ENCODE measurements at regions of chr3 and their contacts with region 1.

Region 1: DNA sequence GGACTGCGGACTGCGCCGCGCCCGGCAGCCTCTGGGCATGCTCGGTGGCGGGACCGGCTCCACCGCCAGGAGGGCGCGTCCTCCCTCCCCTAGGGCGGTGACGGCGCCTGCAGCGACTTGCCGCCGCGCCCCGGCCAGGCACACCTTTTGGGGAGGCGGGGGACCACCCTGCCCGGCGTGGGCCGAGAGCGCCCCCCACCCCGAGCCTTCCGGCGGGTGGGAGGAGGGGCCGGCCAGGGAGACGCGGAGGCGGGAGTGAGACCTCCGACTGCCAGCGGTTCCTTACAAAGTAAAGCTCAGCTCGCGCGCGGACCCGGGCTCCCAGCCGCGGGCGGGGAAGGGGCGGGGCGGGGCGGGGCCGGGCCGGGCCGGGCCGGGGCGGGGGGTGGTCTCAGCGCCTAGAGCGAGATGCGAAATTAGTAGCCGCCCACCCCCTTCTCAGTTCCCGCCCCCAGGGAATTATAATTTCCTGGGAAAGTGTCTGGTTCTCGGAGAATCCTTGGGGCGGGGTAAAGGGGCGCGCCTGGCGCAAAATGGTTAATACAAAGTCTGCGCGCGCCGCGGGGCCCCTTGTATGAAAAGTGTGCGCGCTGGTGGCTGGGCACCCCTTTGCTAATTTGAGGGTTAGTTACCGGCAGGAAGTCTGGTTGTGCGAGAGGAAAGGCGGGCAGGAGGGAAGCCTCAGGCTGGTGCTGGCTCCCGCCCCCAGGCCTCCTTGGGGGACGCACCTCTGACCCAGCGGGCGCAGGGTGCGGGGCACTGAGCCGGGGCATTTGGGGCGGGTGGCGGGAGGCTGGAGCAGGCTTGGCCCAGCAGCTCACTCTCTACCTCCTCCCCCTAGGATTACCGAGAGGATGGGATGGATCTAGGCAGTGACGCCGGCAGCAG is 224.8 kb upstream of the IL12A start:
- DNase-seq: peak; percentile 91
- ATAC-seq: peak; percentile 43
- H3K4me3 ChIP-seq: peak overlapping the region; percentile 76
- H3K27ac ChIP-seq: peak overlapping the region; percentile 90
- H3K4me1 ChIP-seq: peaks cover 43% of the 10 kb centered on the region
- H3K27me3 ChIP-seq: no peaks in the 10 kb centered on the region
- CTCF ChIP-seq: no peak

Region 2: GRCh38 chr3:159458010-159458409 is 305.8 kb before region 1 on chr3:
- CTCF ChIA-PET with region 1: no interaction called
- POLR2A ChIA-PET with region 1: no interaction called
- intact Hi-C with region 1: loop called (anchors 10 kb)
- DNase-seq: peak; percentile 98
- ATAC-seq: peak; percentile 99
- H3K4me3 ChIP-seq: no peak overlapping the region
- H3K27ac ChIP-seq: peak overlapping the region; percentile 50
- H3K4me1 ChIP-seq: peaks cover 22% of the 10 kb centered on the region
- H3K27me3 ChIP-seq: no peaks in the 10 kb centered on the region
- CTCF ChIP-seq: no peak

Region 3: GRCh38 chr3:159654186-159655134 is 109.4 kb before region 1 on chr3:
- CTCF ChIA-PET with region 1: no interaction called
- POLR2A ChIA-PET with region 1: no interaction called
- intact Hi-C with region 1: loop called (anchors 1 kb)
- DNase-seq: peak; percentile 89
- ATAC-seq: peak; percentile 84
- H3K4me3 ChIP-seq: no peak overlapping the region
- H3K27ac ChIP-seq: peak overlapping the region; percentile 69
- H3K4me1 ChIP-seq: peaks cover 29% of the 10 kb centered on the region
- H3K27me3 ChIP-seq: no peaks in the 10 kb centered on the region
- CTCF ChIP-seq: no peak

Region 4: DNA sequence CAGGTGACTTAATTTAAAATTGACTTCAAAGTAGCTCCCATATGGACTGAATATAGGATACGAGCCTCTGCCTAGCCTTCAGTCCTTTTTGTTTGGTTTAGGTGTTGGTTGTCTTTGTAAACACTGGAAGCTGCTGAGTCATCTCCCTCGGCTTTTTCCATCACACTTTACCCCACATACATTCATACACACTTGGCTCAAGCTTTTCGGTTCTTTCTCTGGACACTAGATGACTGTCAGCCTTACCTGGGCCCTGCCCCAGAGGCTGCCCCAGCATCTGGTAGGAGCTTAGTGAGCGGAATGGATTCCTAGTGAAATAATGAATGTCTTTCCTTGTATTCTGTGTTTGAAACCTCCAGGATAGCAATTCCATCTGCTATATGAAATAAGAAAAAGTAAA is 23.3 kb after region 1 on chr3:
- CTCF ChIA-PET with region 1: interaction called, 5 read pairs
- POLR2A ChIA-PET with region 1: interaction called, 4 read pairs
- intact Hi-C with region 1: loop called (anchors 1 kb)
- DNase-seq: peak; percentile 97
- ATAC-seq: peak; percentile 81
- H3K4me3 ChIP-seq: peak overlapping the region; percentile 45
- H3K27ac ChIP-seq: peak overlapping the region; percentile 80
- H3K4me1 ChIP-seq: peaks cover 77% of the 10 kb centered on the region
- H3K27me3 ChIP-seq: no peaks in the 10 kb centered on the region
- CTCF ChIP-seq: no peak

Region 5: DNA sequence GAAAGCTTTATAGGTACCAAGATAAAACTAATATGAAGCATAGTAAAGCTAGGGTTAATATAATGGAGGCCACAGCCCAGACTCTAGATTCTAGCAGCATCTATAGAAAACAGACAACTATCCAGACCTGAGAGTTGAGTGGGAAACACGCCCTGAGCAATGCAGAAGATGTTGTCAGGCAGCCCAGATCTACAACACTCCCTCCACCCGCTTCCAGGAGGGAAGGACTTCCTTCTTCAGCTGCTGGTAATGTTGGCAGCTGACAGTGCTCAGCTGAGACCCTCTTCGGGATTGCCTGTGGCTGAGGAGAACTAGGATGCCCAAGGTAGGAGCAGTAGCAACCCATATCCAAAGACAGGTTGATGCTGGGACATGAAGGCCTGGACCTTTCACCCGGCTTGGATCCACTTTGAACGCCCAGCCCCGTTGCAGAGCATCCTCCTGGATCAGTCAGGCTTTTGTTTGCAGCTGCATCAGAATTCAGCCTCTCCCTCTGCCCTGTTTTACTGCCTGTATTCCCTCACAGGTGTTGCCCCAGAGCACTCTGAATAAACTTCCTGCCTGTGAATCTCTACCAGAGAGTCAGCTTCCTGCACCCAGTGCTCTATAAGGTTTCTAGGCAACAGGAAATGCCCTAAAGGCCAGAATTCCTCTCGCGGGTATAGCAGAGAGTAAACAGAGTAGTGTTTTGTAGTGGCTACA is 50.1 kb after region 1 on chr3:
- CTCF ChIA-PET with region 1: interaction called, 3 read pairs
- POLR2A ChIA-PET with region 1: interaction called, 19 read pairs
- intact Hi-C with region 1: loop called (anchors 2 kb)
- DNase-seq: peak; percentile 96
- ATAC-seq: peak; percentile 99
- H3K4me3 ChIP-seq: peak overlapping the region; percentile 41
- H3K27ac ChIP-seq: peak overlapping the region; percentile 71
- H3K4me1 ChIP-seq: peaks cover 45% of the 10 kb centered on the region
- H3K27me3 ChIP-seq: no peaks in the 10 kb centered on the region
- CTCF ChIP-seq: no peak

Region 6: DNA sequence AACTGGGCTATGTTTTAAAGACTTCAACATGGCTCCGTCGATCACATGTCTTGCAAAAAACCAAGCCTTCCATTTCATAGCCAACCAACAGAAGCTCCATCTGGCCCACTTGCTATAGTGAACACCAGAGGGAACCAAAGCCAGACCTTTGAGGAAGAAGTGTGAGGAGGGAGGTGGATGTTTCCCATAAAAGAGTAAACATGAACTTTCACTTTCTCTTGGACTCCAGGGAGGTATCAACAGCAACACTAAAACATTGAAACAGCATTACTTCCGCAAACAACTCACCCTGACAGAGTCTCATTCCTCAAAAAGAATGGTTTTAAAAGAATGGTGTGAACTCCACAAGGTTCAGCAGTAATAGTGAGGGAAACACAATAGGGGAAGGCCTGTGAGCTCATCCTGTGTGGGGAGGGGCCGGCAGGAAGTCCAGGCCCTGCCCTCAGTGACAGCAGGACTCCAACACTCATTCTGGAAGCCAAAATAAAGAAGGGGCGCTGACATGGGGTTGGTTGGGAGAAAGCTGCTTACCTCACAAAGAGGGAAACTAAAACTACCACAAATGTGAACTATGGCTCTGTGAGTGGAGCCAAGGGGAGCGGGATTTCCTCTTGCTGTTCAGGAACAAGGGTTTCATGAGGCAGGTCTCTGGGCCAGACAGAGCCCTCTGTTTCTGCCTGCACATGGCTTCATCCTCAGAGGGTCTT is 165.7 kb after region 1 on chr3:
- CTCF ChIA-PET with region 1: no interaction called
- POLR2A ChIA-PET with region 1: no interaction called
- intact Hi-C with region 1: loop called (anchors 2 kb)
- DNase-seq: peak; percentile 81
- ATAC-seq: peak; percentile 46
- H3K4me3 ChIP-seq: peak overlapping the region; percentile 6; the same call in 1 of the 2 replicates
- H3K27ac ChIP-seq: peak overlapping the region; percentile 88
- H3K4me1 ChIP-seq: peaks cover 32% of the 10 kb centered on the region
- H3K27me3 ChIP-seq: no peaks in the 10 kb centered on the region
- CTCF ChIP-seq: peak; percentile 70

Region 7: GRCh38 chr3:161239703-161240102 is 1475.9 kb after region 1 on chr3:
- CTCF ChIA-PET with region 1: no interaction called
- POLR2A ChIA-PET with region 1: interaction called, 12 read pairs
- intact Hi-C with region 1: no loop called
- DNase-seq: no peak
- ATAC-seq: no peak
- H3K4me3 ChIP-seq: no peak overlapping the region
- H3K27ac ChIP-seq: no peak overlapping the region
- H3K4me1 ChIP-seq: no peaks in the 10 kb centered on the region
- H3K27me3 ChIP-seq: no peaks in the 10 kb centered on the region
- CTCF ChIP-seq: no peak

Measured in PC-3 (cell line).